ENCODE measurements at regions of chr15 and their contacts with region 1.

Region 1: GRCh38 chr15:65920825-65921309 is 51.6 kb downstream of the RAB11A start:
- DNase-seq: no peak
- ATAC-seq: no peak
- H3K4me3 ChIP-seq: no peak overlapping the region
- H3K27ac ChIP-seq: no peak overlapping the region
- H3K4me1 ChIP-seq: no peaks in the 10 kb centered on the region
- H3K27me3 ChIP-seq: no peaks in the 10 kb centered on the region
- CTCF ChIP-seq: no peak

Region 2: GRCh38 chr15:65460741-65461347 is 460.0 kb before region 1 on chr15:
- CTCF ChIA-PET with region 1: no interaction called
- POLR2A ChIA-PET with region 1: no interaction called
- in situ Hi-C with region 1: no loop called
- intact Hi-C with region 1: no loop called
- DNase-seq: no peak
- ATAC-seq: no peak
- H3K4me3 ChIP-seq: no peak overlapping the region
- H3K27ac ChIP-seq: no peak overlapping the region
- H3K4me1 ChIP-seq: no peaks in the 10 kb centered on the region
- H3K27me3 ChIP-seq: no peaks in the 10 kb centered on the region
- CTCF ChIP-seq: no peak

Region 3: GRCh38 chr15:65804252-65804931 is 116.5 kb before region 1 on chr15:
- CTCF ChIA-PET with region 1: no interaction called
- POLR2A ChIA-PET with region 1: no interaction called
- in situ Hi-C with region 1: no loop called
- intact Hi-C with region 1: no loop called
- DNase-seq: no peak
- ATAC-seq: no peak
- H3K4me3 ChIP-seq: no peak overlapping the region
- H3K27ac ChIP-seq: no peak overlapping the region
- H3K4me1 ChIP-seq: no peaks in the 10 kb centered on the region
- H3K27me3 ChIP-seq: no peaks in the 10 kb centered on the region
- CTCF ChIP-seq: no peak

Region 4: DNA sequence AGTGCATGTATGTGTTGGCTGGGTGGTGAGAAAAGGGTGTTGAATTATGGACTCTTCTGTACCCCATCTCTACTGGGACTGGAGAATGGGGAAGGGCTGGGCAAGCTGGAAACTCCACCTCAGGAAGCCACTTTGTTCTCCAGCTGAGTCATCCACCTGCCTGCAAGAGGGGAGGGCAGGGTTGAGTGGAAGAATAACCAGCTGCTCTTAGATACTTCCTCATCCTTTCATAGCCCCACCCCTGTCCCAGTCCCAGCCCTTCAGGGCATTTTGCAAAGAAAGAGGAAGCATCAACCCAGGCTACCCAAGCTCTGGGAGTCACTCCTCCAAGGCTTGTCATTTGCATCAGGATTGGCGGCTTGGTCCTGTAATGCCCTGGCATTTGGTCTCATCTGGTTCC is 18.5 kb before region 1 on chr15:
- CTCF ChIA-PET with region 1: no interaction called
- POLR2A ChIA-PET with region 1: interaction called, 16 read pairs
- in situ Hi-C with region 1: no loop called
- intact Hi-C with region 1: no loop called
- DNase-seq: no peak
- ATAC-seq: no peak
- H3K4me3 ChIP-seq: no peak overlapping the region
- H3K27ac ChIP-seq: no peak overlapping the region
- H3K4me1 ChIP-seq: no peaks in the 10 kb centered on the region
- H3K27me3 ChIP-seq: no peaks in the 10 kb centered on the region
- CTCF ChIP-seq: no peak

Region 5: DNA sequence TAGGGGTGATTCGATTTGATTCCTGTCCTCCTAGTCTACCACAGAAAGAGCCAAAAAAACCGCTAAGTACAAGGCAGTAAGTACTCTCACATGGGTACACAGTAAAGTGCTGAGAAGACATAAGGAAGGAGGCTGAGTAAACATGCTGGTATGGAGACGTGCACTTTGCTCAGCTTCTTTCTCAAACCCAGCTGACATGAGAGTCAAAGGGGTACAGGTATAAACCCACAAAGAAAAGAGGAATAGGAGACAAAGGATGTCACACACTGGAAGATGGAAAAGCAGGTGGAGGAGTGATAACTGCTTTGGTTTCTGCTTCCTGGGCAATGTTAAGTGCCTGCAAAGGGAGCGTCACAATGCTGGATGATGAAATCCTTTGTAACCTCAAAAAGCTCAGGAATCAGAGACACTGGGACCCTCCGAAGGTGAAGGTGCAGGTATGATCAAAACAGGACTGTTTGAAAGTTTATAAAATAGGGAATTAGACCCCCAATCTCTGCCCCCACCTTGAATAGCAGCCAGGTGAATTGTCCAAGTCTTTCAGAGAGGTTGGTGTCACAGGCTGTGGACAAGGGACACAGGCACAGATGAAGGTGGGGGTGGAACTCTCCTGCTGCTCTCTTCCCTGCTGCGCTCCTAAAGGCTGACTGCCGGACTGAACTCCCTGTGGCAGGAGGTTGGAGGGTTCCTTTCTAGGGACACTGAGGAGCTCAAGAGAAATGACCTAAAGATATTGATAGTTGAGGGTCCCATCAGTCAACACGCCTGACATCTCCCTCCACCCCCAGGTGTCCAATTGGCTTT is 50.3 kb after region 1 on chr15:
- CTCF ChIA-PET with region 1: no interaction called
- POLR2A ChIA-PET with region 1: no interaction called
- in situ Hi-C with region 1: no loop called
- intact Hi-C with region 1: no loop called
- DNase-seq: no peak
- ATAC-seq: no peak
- H3K4me3 ChIP-seq: peak overlapping the region in 1 of 2 experiments; percentile 9; a peak in 2 of 4 replicates
- H3K27ac ChIP-seq: peak overlapping the region; percentile 52; the same call in 1 of the 2 replicates
- H3K4me1 ChIP-seq: no peaks in the 10 kb centered on the region
- H3K27me3 ChIP-seq: no peaks in the 10 kb centered on the region; the same call in 1 of the 2 replicates
- CTCF ChIP-seq: no peak

Region 6: GRCh38 chr15:66328721-66329220 is 407.9 kb after region 1 on chr15:
- CTCF ChIA-PET with region 1: no interaction called
- POLR2A ChIA-PET with region 1: interaction called, 16 read pairs
- in situ Hi-C with region 1: no loop called
- intact Hi-C with region 1: no loop called
- DNase-seq: no peak
- ATAC-seq: no peak
- H3K4me3 ChIP-seq: no peak overlapping the region
- H3K27ac ChIP-seq: no peak overlapping the region
- H3K4me1 ChIP-seq: no peaks in the 10 kb centered on the region
- H3K27me3 ChIP-seq: no peaks in the 10 kb centered on the region
- CTCF ChIP-seq: no peak

Measured in Panc1 (cell line).